Posterior cingulate gyrus (tissue), 11 donors: ENCODE measurements at regions of chr1 and their contacts with region 1.

Region 1: DNA sequence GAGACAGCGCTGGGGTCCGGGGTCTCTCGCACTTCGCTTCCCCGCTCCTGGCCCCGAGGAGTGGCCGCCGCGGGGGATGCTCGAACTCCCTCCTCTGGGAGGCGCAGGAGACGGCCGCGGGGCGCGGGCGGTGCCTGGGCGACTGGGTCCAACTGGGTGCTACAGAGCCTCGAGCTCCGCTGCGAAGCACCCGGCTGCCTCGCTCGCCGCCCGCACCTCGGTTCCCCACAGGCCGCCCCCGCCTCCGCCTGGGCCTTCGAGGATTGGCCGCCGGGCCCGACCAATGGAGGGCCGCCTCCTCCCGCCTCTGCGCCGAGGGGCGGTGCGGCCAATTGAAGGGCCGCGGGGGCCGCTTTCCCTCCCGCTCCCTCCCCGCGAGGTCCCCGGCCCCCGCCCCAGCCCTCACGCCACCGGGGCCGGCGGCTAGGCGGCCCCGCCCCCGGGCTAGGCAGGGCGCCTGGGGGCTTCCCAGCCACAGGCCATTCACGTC is at the start of gene CNN3:
- DNase-seq: peak; percentile 88 to 99 (median 94)

Region 2: GRCh38 chr1:94688646-94689045 is 238.3 kb before region 1 on chr1:
- intact Hi-C with region 1: no loop called
- DNase-seq: no peak

Region 3: DNA sequence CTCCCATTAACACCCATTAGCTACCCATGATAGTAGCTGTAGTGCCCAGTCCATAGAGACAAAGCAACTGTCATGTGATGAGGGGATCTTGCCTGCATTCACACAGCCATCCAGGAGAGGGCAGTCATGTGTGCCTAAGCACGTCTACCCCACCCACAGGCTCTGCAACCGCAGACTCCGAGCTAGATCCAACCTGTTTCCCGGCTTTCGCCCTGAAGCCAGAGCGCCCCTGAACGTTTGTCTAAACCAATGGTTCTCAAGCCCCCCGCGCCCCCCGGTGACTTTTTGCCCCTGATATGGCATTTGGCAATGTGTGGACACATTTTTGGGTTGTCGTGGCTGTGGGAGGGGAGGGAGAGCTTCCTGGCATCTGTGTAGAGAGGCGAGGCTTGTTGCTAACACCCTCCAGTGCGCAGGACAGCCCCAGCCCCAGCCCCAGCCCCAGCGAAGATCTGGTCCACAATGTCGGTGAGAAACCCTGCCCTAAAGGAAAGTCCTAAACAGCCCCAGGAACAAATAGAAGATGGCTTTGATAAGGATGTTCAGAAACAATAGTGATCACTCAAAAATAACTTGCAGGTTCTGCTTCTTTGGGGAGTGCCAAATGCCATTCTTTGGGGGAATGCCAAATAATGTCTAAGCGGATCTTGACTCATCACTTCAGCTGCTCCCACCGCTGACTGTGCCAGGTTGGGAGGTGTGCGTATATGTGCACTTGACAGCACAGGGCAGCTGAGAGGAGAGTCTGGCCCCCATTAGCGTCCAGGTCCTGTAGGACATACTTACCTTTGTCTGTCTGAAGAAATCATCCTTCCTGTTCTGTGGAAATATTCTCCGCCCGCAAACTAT is 72.3 kb before region 1 on chr1:
- intact Hi-C with region 1: loop called (anchors 2 kb)
- DNase-seq: peak; percentile 64 to 97 (median 82)

Region 4: DNA sequence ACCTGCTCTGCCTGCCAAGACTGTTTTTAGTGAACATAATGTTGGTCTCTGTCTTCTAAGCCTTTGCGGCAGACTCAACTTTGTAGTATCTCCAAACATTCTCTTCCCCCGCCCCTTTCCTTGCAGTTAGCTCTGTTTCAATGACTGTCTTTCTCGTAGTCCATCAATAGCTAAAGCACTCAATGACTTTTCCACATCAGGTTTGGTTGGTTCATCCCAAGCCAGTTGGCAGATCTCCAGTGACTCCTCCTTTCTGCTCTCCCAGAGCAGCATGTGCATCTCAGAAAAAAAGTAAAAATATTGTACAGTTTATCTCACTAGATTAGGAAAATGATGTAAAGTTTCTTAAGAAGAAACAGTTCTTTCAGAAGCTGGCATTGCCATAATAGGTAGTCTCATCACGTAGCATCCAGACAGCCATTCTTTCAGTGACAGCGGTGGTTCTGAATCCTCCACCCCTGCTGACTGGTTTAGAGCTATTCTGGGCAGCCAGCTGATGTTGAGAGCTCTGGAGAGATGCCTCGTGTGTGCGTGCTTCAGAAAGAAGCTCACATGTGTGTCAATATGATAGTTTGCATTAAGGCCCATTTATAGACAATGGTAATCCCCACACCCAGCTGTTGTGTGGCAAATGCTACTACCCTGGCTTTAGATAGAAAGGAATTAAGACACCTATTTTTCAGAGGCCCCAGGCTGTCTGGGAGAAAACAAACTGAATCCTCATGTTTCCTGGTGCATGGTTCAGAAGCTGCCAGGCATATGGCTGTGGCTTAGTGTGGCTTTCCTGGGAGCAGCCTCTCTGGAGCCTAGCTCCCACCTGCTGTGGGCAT is 53.2 kb before region 1 on chr1:
- intact Hi-C with region 1: loop called (anchors 5 kb)
- DNase-seq: peak in 9 of 10 donors; percentile 42 to 93 (median 63)

Region 5: DNA sequence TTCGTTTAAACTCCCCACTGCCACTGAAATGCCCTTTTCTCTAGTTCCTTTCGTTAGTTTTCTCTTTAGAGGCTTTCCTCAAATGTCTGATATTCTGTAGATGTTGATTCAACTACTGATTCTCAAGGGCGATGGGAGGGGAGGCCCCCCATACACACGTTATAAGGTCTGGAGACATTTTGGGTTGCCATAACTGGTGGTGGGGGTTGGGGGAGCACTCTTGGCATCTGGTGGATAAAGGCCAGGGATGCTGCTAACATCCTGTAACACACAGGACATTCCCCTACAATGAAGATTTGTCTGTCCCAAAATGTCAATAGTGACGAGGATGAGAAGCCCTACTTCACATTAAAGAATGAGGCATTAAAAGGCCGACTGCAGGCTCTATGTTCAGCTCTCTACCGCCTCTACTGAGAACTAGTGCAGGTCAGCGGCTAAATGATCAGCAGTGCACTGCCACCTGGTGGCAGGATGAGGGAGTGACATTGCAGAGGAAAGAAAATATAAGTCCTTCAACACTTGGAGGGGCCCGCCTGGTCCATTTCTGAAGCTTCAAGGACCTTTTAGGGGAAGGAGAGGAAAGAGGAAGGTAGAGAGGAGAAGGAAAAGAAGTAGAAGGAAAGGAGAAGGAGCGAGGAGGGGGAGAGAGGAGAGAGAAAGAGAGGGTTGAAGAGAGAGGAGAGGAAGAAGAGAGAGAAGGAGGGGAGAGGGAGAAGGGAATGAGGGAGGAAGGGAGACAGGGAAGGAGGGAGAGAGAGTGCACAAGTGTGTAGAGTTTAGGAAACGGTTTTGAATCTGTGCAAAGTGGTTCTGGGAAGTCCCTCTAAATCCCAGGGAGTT is 116.4 kb after region 1 on chr1:
- intact Hi-C with region 1: loop called (anchors 5 kb)
- DNase-seq: peak; percentile 66 to 97 (median 83)

Region 6: DNA sequence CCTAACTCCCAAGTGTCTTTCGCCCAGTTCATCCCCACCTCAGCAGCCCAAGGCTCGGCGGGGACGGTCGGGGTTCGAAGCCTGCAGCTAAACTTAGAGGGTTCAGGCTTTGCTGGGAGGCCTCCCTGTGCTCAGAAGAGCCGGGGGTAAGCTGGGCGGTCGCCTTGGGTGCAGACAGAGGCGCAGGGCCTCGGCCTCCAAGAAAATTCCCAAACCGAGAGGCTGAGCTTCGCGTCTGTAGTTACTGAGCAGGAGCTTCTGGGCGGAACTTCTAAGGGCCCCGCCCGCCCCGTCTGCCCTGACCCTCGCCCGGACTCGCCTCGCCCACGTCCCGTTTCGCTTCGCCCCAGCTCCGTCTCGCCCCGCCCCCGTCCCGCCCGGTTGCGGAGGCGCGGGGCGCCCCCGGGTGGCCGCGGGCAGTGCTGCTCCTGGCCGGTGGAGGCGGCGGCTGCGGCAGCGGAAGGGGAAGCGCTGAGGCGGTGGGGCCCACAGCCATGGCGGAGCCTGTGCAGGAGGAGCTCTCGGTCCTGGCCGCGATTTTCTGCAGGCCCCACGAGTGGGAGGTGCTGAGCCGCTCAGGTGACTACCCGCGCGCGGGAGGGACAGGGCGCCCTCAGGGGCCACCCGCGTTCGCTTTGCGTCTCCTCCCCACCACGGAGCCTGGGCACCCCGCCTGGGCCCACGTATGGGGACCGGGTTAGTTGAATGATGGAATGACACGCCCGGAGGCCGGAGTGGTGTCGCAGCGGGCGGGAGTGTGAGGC is 307.0 kb after region 1 on chr1 and contains the start of gene RWDD3:
- intact Hi-C with region 1: loop called (anchors 5 kb)
- DNase-seq: peak; percentile 81 to 98 (median 89)